HepG2 (cell line): ENCODE measurements at regions of chr6 and their contacts with region 1.

Region 1: DNA sequence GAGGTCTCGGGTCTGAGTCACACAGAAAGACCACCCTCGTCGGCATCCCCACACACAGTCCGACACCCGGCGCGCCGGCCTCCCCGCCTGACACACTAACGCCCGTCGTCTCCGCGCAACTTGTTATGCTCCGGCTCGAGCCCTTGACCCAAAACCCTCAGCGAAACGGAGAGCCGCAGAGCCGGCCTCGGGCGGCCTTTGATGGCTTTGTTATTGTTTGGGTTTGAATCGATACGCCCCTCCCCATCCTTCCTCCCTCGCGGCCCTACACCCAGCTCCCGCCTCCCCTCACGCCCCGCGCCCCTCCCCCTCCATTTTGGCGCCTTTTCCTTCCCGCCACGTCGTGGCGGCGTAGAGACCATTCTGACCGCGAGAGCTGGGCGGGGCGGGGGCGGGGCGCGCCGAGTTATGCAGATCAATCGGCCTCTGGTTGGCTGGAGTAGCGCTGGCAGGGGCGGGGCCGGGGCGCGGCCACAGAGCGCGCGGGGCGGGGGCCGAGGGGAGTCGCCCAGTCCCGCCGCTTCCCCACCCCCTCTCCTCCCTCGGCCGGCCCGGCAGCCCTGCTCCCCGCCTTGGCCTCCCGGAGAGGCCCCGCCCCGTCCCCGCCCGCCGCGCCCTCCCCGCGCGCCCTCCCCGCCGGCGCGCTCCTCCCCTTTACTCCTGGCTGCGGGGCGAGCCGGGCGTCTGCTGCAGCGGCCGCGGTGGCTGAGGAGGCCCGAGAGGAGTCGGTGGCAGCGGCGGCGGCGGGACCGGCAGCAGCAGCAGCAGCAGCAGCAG is at the start of gene PIM1:
- DNase-seq: peak; percentile 98
- ATAC-seq: peak; percentile 75
- H3K4me3 ChIP-seq: peak within 1 kb of the TSS; percentile 98 to 100 (median 99)
- H3K27ac ChIP-seq: peak within 1 kb of the TSS; percentile 91
- H3K4me1 ChIP-seq: peaks cover 60% of the 10 kb centered on the region
- H3K27me3 ChIP-seq: no peaks in the 10 kb centered on the region; a peak in 1 of 5 replicates
- CTCF ChIP-seq: peak; percentile 41
- EP300 ChIP-seq: peak; percentile 56 to 95; a peak in 3 of 4 replicates
- POLR2A ChIP-seq: peak; percentile 69 to 88
- RAD21 ChIP-seq: peak; percentile 64
- total RNA-seq, gene PIM1: 19.1 and 29.4 TPM in 2 replicates

Region 2: GRCh38 chr6:36075656-36076055 is 1094.0 kb before region 1 on chr6:
- CTCF ChIA-PET with region 1: no interaction called
- POLR2A ChIA-PET with region 1: no interaction called
- in situ Hi-C with region 1: no loop called
- intact Hi-C with region 1: no loop called
- DNase-seq: peak; percentile 71
- ATAC-seq: peak; percentile 98
- H3K4me3 ChIP-seq: no peak overlapping the region
- H3K27ac ChIP-seq: peak overlapping the region; percentile 43
- H3K4me1 ChIP-seq: peaks cover 14% of the 10 kb centered on the region
- H3K27me3 ChIP-seq: no peaks in the 10 kb centered on the region
- CTCF ChIP-seq: peak; percentile 87
- EP300 ChIP-seq: peak in 1 of 2 experiments; percentile 32; a peak in 1 of 4 replicates
- POLR2A ChIP-seq: no peak
- RAD21 ChIP-seq: peak; percentile 41; the same call in 1 of the 2 replicates

Region 3: DNA sequence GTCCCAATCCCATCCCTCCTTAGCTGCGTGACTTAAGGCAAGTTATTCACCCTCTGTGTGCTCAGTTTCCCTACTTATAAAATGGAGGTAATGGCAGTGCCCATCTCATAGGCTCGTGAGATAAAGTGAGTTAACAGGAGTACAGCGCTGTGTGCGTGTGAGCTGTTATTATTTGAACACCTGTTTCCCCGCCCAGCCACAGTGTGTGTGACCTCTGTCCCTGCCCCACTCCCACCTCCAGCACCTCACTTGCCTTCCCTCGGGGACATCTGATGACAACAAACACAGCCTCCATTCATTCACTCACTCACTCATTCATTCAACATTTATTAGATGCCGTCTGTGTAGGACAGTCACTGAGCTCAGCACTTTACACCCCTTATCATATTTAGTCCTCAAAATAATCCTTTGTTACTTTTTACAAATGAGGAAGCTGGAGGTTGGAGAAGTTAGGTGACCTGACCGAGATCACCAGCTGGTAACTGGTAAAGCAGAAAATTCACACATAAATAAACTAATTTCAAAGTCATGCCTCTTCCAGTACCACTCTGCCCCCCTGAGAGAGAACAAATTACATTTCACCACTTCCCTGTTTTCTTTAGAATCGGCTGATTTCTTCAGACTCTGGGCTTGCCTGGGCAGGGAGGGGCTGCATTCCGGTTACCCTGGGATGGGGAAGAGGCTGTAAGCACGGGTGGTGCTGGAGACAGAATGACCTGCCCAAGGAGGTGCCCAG is 389.1 kb before region 1 on chr6:
- CTCF ChIA-PET with region 1: no interaction called
- POLR2A ChIA-PET with region 1: no interaction called
- in situ Hi-C with region 1: no loop called
- intact Hi-C with region 1: no loop called
- DNase-seq: peak; percentile 18
- ATAC-seq: peak; percentile 59
- H3K4me3 ChIP-seq: no peak overlapping the region; a peak in 1 of 6 replicates
- H3K27ac ChIP-seq: no peak overlapping the region
- H3K4me1 ChIP-seq: peaks cover 12% of the 10 kb centered on the region
- H3K27me3 ChIP-seq: peaks cover 14 to 72% of the 10 kb centered on the region in 2 experiments; a peak in 4 of 5 replicates
- CTCF ChIP-seq: no peak
- EP300 ChIP-seq: no peak
- POLR2A ChIP-seq: no peak
- RAD21 ChIP-seq: no peak

Region 4: GRCh38 chr6:36839749-36840431 is 329.8 kb before region 1 on chr6:
- CTCF ChIA-PET with region 1: no interaction called
- POLR2A ChIA-PET with region 1: no interaction called
- in situ Hi-C with region 1: no loop called
- intact Hi-C with region 1: no loop called
- DNase-seq: no peak
- ATAC-seq: peak; percentile 32
- H3K4me3 ChIP-seq: peak overlapping the region; percentile 27 to 68 (median 49)
- H3K27ac ChIP-seq: no peak overlapping the region
- H3K4me1 ChIP-seq: peaks cover 51% of the 10 kb centered on the region
- H3K27me3 ChIP-seq: peaks cover 19 to 38% of the 10 kb centered on the region in 2 experiments
- CTCF ChIP-seq: peak; percentile 25; the same call in 1 of the 2 replicates
- EP300 ChIP-seq: no peak
- POLR2A ChIP-seq: no peak
- RAD21 ChIP-seq: no peak

Region 5: DNA sequence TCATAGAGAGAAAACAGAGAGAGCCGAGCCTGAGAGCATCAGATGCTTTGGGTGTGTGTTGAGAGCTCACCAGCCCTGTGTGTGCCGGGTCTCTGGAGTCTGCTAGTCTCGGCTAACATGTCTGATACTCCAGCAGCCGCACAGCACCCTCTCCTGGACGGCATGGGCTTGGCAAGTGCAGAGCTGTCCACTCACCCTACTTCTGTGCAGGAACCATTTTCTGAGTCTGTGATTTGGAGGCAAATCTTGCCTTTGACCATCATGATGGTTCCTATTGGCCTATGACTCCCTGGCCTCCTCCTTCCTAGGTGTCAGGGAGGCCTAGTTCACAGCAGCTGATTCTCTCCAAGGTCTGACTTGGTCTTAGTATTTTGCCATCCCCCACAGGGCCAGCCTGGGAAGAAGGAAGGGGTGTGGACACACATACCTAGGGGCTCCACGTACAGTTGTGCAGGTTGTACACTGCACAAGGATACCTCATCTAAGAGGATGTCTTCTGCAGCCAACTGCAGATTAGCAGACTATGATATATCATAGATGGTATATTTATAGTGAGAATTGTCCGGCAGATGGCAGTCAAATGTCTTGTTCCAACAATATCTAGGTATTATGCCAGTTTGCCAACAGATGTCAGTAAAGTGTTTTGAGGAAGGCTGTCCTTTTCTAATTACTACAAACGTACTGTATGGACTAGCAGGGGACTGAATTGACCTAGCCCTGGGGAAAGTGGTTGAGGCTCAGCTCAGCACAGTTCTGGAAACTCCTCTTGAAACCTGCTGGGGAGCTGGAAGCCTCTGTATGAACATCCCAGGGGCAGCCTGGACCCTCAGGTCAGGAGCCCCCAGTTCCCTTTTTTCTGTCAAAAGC is 151.3 kb before region 1 on chr6:
- CTCF ChIA-PET with region 1: interaction called, 41 read pairs
- POLR2A ChIA-PET with region 1: interaction called, 7 read pairs
- in situ Hi-C with region 1: loop called (anchors 10 kb)
- intact Hi-C with region 1: loop called (anchors 1 kb)
- DNase-seq: peak; percentile 90
- ATAC-seq: peak; percentile 95
- H3K4me3 ChIP-seq: no peak overlapping the region
- H3K27ac ChIP-seq: no peak overlapping the region
- H3K4me1 ChIP-seq: peaks cover 39% of the 10 kb centered on the region
- H3K27me3 ChIP-seq: peaks cover 4 to 15% of the 10 kb centered on the region in 2 experiments; a peak in 2 of 5 replicates
- CTCF ChIP-seq: peak; percentile 92
- EP300 ChIP-seq: no peak
- POLR2A ChIP-seq: no peak
- RAD21 ChIP-seq: peak; percentile 82

Region 6: DNA sequence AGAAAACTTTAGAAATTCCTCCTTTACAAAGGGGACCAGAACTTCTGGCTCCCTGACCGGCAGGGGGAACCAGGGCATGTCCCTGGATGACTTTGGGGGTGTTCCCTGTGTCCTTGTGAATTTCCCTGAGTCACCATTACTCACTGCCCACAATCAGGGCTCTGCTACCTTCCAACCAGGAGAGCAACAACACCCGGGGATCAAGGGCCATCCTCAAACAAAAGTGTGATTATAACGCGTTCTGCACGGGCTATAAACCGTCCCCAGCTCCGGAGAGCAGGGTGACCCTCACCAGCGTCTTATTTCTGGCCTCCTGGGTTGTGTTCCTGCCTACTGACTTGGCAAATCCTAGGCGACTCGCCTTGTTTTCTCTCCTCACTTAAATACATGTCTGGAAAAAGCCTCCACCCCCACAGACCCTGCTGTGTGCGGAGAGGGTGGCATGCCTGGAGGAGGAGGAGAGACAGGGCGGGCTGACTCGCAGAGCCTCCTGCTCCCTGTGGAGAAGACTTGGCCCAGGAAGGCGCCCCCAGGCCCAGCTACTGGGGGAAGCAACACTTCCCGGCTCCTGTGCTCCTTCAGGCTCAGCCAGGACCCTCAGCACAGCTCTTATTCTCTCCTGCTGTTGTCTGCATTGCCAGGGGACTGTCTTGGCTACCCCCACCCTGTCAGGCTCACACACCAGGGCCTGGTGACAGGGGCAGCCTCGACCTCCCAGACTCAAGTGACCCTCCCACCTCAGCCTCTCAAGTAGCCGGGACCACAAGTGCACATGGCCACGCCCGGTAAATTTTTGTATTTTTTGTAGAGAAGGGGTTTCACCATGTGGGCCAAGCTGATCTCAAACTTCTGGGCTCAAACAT is 110.1 kb before region 1 on chr6:
- CTCF ChIA-PET with region 1: interaction called, 41 read pairs
- POLR2A ChIA-PET with region 1: interaction called, 119 read pairs
- in situ Hi-C with region 1: loop called (anchors 5 kb)
- intact Hi-C with region 1: loop called (anchors 1 kb)
- DNase-seq: peak; percentile 99
- ATAC-seq: peak; percentile 91
- H3K4me3 ChIP-seq: peak overlapping the region; percentile 32 to 67 (median 44); a peak in 5 of 6 replicates
- H3K27ac ChIP-seq: peak overlapping the region; percentile 97
- H3K4me1 ChIP-seq: peaks cover 76% of the 10 kb centered on the region
- H3K27me3 ChIP-seq: no peaks in the 10 kb centered on the region
- CTCF ChIP-seq: peak; percentile 92
- EP300 ChIP-seq: peak; percentile 89 to 96; a peak in 3 of 4 replicates
- POLR2A ChIP-seq: peak in 1 of 2 experiments; percentile 85; a peak in 2 of 4 replicates
- RAD21 ChIP-seq: peak; percentile 96

Region 7: GRCh38 chr6:37110500-37111461 is 58.9 kb before region 1 on chr6:
- CTCF ChIA-PET with region 1: no interaction called
- POLR2A ChIA-PET with region 1: interaction called, 132 read pairs
- in situ Hi-C with region 1: no loop called
- intact Hi-C with region 1: no loop called
- DNase-seq: peak; percentile 96
- ATAC-seq: peak; percentile 82
- H3K4me3 ChIP-seq: peak overlapping the region; percentile 20 to 45 (median 41); a peak in 5 of 6 replicates
- H3K27ac ChIP-seq: peak overlapping the region; percentile 76
- H3K4me1 ChIP-seq: peaks cover 79% of the 10 kb centered on the region
- H3K27me3 ChIP-seq: no peaks in the 10 kb centered on the region
- CTCF ChIP-seq: peak; percentile 9; the same call in 1 of the 2 replicates
- EP300 ChIP-seq: peak; percentile 61 to 95; a peak in 3 of 4 replicates
- POLR2A ChIP-seq: no peak
- RAD21 ChIP-seq: peak; percentile 10; the same call in 1 of the 2 replicates

Region 8: DNA sequence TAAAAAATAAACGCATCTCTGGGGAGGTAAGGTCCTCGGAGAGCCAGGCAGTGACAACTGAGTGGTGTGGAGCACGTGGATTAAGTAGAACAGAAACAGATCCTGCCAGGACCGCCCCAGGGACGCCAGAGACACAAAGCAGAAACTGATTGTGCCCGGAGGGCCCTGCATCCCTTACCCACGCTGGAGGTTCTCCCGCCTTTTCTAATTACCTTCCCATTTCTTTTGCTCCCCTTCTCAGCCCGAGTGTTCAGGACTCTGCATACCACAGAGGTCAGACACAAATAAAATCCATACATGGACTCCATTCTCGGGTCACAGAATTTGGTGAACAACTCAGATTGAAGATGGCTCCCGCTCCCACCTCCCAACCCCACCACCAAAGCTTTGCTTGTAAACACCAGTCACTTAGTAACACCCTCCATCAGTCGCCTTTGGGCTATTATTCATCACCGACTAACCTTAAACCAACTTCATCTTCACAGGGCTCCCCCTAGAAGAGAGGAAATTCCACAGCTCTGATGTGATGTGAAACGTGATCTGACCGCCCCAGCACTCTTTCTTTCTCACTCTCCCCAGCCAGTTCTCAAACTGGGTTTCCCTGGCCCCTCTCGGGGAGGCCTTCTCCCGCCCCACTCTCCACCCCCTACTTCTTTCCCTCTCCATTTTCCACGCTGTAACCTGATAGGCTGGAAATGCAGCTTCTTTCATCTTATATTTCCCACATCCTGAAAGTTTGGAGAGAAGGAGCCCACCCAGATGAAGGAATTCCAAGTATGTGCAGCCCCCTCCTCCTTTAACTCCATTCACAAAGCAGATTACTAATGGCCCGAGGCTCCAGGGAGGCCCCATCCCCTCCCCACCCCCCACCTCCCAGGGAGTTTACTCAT is 32.2 kb before region 1 on chr6:
- CTCF ChIA-PET with region 1: interaction called, 3 read pairs
- POLR2A ChIA-PET with region 1: interaction called, 107 read pairs
- in situ Hi-C with region 1: loop called (anchors 5 kb)
- intact Hi-C with region 1: no loop called
- DNase-seq: peak; percentile 93
- ATAC-seq: peak; percentile 81
- H3K4me3 ChIP-seq: peak overlapping the region; percentile 58 to 71 (median 62)
- H3K27ac ChIP-seq: peak overlapping the region; percentile 92
- H3K4me1 ChIP-seq: peaks cover 82% of the 10 kb centered on the region
- H3K27me3 ChIP-seq: no peaks in the 10 kb centered on the region
- CTCF ChIP-seq: peak; percentile 16; the same call in 1 of the 2 replicates
- EP300 ChIP-seq: peak in 1 of 2 experiments; percentile 27; a peak in 1 of 4 replicates
- POLR2A ChIP-seq: peak; percentile 44 to 49
- RAD21 ChIP-seq: no peak

Region 9: GRCh38 chr6:37207903-37208456 is 38.3 kb after region 1 on chr6:
- CTCF ChIA-PET with region 1: interaction called, 11 read pairs
- POLR2A ChIA-PET with region 1: interaction called, 4 read pairs
- in situ Hi-C with region 1: no loop called
- intact Hi-C with region 1: loop called (anchors 1 kb)
- DNase-seq: peak; percentile 87
- ATAC-seq: peak; percentile 89
- H3K4me3 ChIP-seq: no peak overlapping the region
- H3K27ac ChIP-seq: no peak overlapping the region
- H3K4me1 ChIP-seq: peaks cover 35% of the 10 kb centered on the region
- H3K27me3 ChIP-seq: peaks cover 2 to 13% of the 10 kb centered on the region in 2 experiments; a peak in 2 of 5 replicates
- CTCF ChIP-seq: peak; percentile 96
- EP300 ChIP-seq: no peak
- POLR2A ChIP-seq: no peak
- RAD21 ChIP-seq: peak; percentile 92